Esophagus muscularis mucosa (tissue), 4 donors: ENCODE measurements at regions of chr1 and their contacts with region 1.

Region 1: DNA sequence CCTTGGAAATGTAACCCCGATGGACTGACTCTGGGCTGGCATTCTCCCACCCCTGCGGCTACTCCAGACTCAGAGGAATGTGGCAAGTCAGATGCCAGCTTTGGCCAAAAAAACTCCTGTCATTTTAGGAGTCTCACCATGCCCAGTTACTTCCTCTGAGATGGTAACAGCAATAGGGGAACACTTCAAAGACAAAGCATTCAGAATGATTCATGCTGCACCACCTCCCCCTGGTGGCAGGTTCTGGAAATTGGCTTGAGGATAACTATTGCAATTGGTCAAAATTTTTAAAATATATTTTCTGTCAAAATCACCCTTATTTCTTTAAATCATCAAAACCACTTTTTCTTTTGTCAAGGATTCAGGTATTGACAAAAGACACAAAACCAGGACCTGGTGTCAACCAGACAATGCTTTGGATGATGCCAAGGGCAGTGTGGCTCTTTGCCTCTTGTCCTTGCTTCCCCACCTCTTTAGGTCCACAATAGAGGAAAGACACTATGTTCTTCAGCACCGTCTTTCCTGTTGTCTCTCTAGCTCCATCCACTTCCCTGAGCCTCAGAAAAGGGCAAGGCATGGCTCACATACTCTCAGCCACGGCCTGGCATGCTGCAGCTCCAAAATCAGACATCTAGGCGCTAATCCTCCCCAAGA is 9.9 kb upstream of the CDCA8 start:
- DNase-seq: peak; percentile 94
- H3K4me3 ChIP-seq: no peak overlapping the region
- H3K27ac ChIP-seq: no peak overlapping the region
- H3K4me1 ChIP-seq: peaks cover 0 to 3% (median 0%) of the 10 kb centered on the region in 4 donors
- H3K27me3 ChIP-seq: no peaks in the 10 kb centered on the region
- CTCF ChIP-seq: peak; percentile 84 to 89 (median 87)
- EP300 ChIP-seq: no peak
- POLR2A ChIP-seq: no peak

Region 2: DNA sequence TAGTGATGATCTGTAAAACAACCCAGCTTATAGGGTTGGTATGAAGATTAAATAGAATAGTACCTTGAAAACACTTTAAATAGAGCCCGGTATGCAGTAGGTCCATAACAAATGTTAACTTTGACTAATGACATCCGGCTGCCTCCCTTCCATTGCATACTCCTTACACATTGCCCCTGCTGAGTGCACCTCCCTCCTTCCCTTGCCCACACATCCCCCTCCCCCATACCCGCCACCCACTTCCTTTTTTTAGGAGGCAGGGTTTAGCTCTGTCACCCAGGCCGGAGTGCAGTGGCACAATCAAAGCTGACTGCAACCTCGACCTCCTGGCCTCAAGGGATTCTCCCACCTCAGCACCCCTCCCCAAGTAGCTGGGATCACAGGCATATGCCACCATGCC is 232.5 kb before region 1 on chr1:
- intact Hi-C with region 1: loop called (anchors 10 kb)
- DNase-seq: no peak
- H3K4me3 ChIP-seq: no peak overlapping the region
- H3K27ac ChIP-seq: no peak overlapping the region
- H3K4me1 ChIP-seq: peaks cover 0 to 5% (median 4%) of the 10 kb centered on the region in 4 donors
- H3K27me3 ChIP-seq: peaks cover 0 to 50% (median 6%) of the 10 kb centered on the region in 4 donors
- CTCF ChIP-seq: no peak
- EP300 ChIP-seq: no peak
- POLR2A ChIP-seq: no peak

Region 3: DNA sequence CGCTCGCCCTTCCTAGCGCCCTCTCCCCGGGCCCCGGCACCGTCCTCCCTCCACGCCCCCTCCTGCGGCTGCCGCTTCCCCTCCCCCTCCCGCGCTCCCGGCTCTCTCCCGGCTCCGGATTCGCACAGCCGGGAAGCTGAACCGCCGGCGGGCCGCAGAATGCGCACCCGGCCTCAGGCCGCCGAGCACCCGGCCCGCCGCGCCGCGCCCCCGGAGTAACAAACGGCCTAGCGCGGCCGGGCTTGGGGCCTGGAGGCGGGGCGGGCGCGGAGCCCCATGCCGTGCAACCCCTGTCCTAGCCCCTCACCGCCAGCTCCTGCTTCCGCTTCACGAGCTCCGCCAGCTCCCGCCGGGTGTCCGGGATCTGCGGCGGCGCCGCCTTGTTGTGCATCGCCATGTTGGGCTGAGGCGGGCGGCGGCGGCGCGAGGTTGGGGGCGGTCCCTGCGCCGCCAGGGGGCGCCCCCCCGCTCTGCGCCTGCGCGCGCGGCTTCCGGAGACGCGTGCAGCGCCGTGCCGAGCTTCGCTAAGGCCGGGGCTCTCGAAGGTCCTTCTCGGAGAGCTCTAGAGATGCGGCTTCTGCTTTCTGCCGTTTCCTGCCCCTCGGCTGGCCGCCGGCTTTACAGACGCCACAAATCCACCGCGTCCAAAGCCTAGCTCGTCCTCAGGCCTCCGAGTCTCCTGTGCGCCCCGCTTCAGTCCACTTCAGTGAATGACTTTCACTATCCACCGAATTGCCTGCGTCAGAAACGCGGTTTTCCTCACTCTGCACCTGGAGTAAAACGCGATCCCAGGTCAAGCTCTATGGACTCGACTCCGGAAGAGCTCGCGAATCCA is 167.9 kb before region 1 on chr1 and contains the start of gene MEAF6:
- intact Hi-C with region 1: loop called (anchors 10 kb)
- DNase-seq: peak; percentile 93
- H3K4me3 ChIP-seq: peak within 1 kb of the TSS; percentile 93 to 98 (median 96)
- H3K27ac ChIP-seq: peak within 1 kb of the TSS; percentile 92 to 95 (median 94)
- H3K4me1 ChIP-seq: peaks cover 10 to 34% (median 28%) of the 10 kb centered on the region in 4 donors
- H3K27me3 ChIP-seq: no peaks in the 10 kb centered on the region
- CTCF ChIP-seq: peak; percentile 81 to 89 (median 84)
- EP300 ChIP-seq: no peak
- POLR2A ChIP-seq: peak; percentile 36
- total RNA-seq, gene MEAF6: 55.2 to 100 (median 78.3) TPM

Region 4: DNA sequence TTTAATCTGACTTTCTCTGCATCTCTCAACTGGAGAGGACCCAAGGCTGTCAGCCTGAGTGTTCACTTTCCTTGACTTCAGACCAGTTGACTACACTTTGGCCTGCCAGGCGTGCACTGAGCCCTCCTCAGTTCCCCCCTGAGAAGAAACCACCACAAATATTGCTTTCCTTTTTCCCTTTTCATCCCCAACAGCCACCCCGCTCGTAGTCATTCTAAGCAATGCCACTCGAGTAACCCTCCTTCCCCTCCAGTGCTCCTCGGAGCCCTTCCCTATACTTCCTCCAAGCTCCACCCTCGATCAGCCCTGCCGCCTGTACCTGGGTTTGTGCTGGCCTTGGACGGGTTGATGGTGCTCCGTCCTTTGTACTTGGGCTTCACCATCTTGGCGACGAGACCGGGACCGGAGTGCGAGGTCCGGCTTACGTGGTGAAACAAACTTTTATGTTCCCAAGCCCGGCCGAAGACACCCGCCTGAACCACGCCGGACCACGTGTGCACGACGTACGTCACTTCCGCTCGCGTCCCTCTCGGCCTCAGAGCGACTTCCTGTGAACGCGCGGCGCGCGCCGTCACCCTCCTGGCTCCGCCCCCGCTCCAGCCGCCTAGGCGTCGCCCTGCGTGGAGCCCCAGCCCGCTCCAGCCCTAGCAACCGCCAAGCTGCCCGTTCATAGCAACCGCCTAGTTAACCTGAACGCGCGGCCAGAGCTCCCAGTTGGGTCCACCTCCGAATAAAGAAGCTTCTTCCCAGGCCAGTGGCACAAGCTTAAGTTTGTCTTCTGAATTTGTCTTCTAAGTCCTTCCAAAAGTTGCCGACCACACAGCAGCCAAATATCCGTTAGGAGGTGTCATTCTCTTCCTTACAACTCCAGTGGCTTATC is 86.8 kb before region 1 on chr1 and contains the start of gene GNL2:
- intact Hi-C with region 1: loop called (anchors 2 kb)
- DNase-seq: peak; percentile 99
- H3K4me3 ChIP-seq: peak within 1 kb of the TSS; percentile 74 to 86 (median 82)
- H3K27ac ChIP-seq: peak within 1 kb of the TSS; percentile 80 to 88 (median 84)
- H3K4me1 ChIP-seq: peaks cover 16 to 30% (median 24%) of the 10 kb centered on the region in 4 donors
- H3K27me3 ChIP-seq: no peaks in the 10 kb centered on the region
- CTCF ChIP-seq: peak in 1 of 3 experiments; percentile 28
- EP300 ChIP-seq: no peak
- POLR2A ChIP-seq: peak; percentile 77
- total RNA-seq, gene GNL2: 25.1 to 36.4 (median 27.0) TPM

Region 5: DNA sequence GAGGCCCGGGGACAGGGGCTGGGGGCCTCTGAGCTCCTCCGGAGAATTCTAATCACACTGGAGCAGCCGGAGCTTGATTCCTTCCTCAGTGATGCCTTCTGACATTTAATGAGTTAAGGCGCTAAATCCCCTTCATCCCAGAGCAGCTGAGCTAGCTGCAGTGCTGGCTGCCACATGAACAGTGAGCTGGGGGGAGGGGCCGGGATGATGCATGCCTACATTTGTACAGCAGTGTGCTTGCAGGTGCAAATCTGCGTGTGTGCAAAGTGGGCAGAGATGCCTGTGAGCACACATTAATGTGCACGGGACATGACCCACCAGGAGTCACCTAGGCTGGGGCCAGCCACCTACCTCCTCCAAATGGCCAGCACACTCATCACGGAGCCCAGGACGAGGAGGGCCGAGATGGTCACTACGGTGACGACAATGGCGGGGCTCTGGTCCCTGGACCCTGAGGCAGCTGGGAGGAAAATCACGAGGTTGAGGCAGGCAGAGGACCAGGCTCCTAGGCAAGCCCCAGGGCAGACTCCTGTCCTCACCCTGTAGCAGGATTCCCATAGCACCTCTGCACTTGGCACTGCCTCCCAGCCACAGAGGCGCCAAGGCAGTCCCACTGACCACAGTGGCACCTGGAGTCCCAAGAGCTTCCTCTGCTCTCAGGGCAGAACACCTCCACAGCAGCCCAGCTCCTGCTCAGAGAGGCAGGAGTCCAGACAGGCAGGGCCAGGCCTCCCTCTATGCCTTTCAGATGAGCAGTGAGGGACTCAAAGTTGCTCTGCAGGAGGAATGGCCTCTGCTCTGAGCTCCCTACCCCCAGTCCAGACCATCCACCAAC is 44.5 kb after region 1 on chr1:
- intact Hi-C with region 1: no loop called
- DNase-seq: no peak
- H3K4me3 ChIP-seq: no peak overlapping the region
- H3K27ac ChIP-seq: no peak overlapping the region
- H3K4me1 ChIP-seq: peaks cover 0 to under 1% (median 0%) of the 10 kb centered on the region in 4 donors
- H3K27me3 ChIP-seq: peaks cover 0 to 54% (median 3%) of the 10 kb centered on the region in 4 donors
- CTCF ChIP-seq: no peak
- EP300 ChIP-seq: no peak
- POLR2A ChIP-seq: no peak

Region 6: DNA sequence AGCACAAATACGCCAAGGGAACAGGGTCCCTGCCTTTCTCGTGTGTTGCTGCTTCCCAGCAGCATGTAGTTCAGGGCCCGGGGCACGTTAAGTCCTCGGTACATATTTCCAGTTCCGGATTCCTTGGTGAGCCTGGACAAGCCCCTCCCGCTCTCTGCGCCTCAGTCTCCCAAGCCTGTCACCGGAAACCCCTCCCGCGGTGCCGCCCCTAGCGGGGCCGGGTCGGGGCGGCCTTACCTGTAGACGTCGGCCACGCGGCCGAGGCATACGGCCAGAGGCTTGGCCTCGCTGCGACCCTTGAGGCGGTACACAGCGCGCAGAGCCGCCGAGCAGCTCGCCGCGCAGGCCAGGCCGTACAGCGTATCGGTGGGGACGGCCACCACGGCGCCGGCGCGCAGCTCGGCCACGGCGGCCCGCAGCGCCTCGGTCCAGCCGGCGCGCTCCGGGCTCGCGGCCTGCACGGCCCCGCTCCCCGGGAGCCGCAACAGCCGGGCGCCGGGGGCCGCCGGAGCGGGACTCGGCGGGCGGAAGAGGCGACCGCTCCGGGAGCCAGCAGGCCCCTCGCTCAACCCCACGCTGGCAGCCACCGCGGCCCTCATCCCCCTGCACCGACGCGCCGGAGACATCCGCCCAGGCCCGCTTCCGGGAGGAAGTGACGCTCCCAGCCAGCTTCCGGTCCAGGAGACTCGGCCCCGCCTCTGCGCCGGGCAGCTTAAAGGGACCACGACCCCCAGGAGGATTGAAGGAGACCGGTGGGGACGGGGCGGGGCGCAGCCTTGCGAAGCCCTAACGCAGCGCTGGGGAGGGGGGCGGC is 125.3 kb after region 1 on chr1 and contains the starts of genes C1orf122 and YRDC:
- intact Hi-C with region 1: loop called (anchors 10 kb)
- DNase-seq: peak; percentile 98
- H3K4me3 ChIP-seq: peak within 1 kb of the TSS; percentile 75 to 96 (median 83)
- H3K27ac ChIP-seq: peak within 1 kb of the TSS; percentile 93 to 98 (median 96)
- H3K4me1 ChIP-seq: peaks cover 19 to 58% (median 46%) of the 10 kb centered on the region in 4 donors
- H3K27me3 ChIP-seq: no peaks in the 10 kb centered on the region
- CTCF ChIP-seq: no peak
- EP300 ChIP-seq: no peak
- POLR2A ChIP-seq: peak; percentile 84
- total RNA-seq, gene C1orf122: 69.9 to 103 (median 94.3) TPM
- total RNA-seq, gene YRDC: 10.8 to 19.1 (median 14.3) TPM